Endothelial cell of umbilical vein (primary cell): ENCODE measurements at regions of chr20 and their contacts with region 1.

Region 1: GRCh38 chr20:45771182-45771759 is 20.4 kb downstream of the WFDC3 start:
- DNase-seq: peak; percentile 88
- H3K4me3 ChIP-seq: no peak overlapping the region
- H3K27ac ChIP-seq: no peak overlapping the region
- H3K4me1 ChIP-seq: no peaks in the 10 kb centered on the region
- H3K27me3 ChIP-seq: peaks cover 0 to 4% of the 10 kb centered on the region in 2 experiments
- CTCF ChIP-seq: peak; percentile 85 to 93
- POLR2A ChIP-seq: no peak

Region 2: GRCh38 chr20:44785769-44786168 is 985.5 kb before region 1 on chr20:
- CTCF ChIA-PET with region 1: no interaction called
- POLR2A ChIA-PET with region 1: no interaction called
- dilution Hi-C with region 1: no loop called
- intact Hi-C with region 1: no loop called
- DNase-seq: no peak
- H3K4me3 ChIP-seq: no peak overlapping the region
- H3K27ac ChIP-seq: no peak overlapping the region
- H3K4me1 ChIP-seq: no peaks in the 10 kb centered on the region
- H3K27me3 ChIP-seq: peaks cover 0 to 2% of the 10 kb centered on the region in 2 experiments
- CTCF ChIP-seq: no peak
- POLR2A ChIP-seq: no peak

Region 3: DNA sequence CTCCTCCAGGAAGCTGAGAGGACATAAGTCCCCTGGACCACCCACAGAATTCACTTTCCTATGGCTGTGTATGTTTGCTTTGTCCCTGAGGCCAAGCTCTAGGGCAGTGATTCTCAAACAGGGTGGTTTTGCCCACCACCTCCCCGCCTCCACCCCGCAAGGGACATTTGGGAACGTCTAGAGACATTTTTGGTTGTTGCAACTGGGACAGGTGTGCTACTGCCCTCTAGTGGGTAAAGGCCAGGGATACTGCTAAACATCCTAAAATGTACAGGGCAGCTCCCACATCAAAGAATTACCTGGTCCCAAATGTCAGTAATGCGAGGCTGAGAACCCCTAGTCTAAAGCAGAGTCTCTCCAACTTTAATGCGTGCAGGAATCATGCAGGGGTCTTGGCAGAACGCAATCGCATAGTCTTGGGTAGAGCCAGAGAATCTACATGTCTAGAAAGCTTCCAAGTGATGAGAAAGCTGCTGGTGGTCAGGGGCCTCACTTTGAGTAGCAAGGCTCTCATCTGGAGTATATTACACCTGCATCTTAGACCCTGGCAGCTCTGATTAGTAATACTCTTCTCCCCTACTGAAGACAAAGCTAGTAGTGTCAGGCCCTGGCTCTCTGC is 675.4 kb before region 1 on chr20:
- CTCF ChIA-PET with region 1: interaction called, 13 read pairs
- POLR2A ChIA-PET with region 1: no interaction called
- dilution Hi-C with region 1: no loop called
- intact Hi-C with region 1: loop called (anchors 5 kb)
- DNase-seq: peak; percentile 52
- H3K4me3 ChIP-seq: no peak overlapping the region
- H3K27ac ChIP-seq: no peak overlapping the region
- H3K4me1 ChIP-seq: peaks cover under 1% of the 10 kb centered on the region
- H3K27me3 ChIP-seq: peaks cover 23 to 30% of the 10 kb centered on the region in 2 experiments
- CTCF ChIP-seq: peak; percentile 53 to 79
- POLR2A ChIP-seq: no peak

Region 4: GRCh38 chr20:45322952-45323383 is 448.3 kb before region 1 on chr20:
- CTCF ChIA-PET with region 1: interaction called, 78 read pairs
- POLR2A ChIA-PET with region 1: no interaction called
- dilution Hi-C with region 1: no loop called
- intact Hi-C with region 1: loop called (anchors 1 kb)
- DNase-seq: peak; percentile 41
- H3K4me3 ChIP-seq: no peak overlapping the region
- H3K27ac ChIP-seq: no peak overlapping the region
- H3K4me1 ChIP-seq: no peaks in the 10 kb centered on the region
- H3K27me3 ChIP-seq: peaks cover 2% of the 10 kb centered on the region in 2 experiments
- CTCF ChIP-seq: peak in 1 of 2 donors; percentile 15
- POLR2A ChIP-seq: no peak

Region 5: DNA sequence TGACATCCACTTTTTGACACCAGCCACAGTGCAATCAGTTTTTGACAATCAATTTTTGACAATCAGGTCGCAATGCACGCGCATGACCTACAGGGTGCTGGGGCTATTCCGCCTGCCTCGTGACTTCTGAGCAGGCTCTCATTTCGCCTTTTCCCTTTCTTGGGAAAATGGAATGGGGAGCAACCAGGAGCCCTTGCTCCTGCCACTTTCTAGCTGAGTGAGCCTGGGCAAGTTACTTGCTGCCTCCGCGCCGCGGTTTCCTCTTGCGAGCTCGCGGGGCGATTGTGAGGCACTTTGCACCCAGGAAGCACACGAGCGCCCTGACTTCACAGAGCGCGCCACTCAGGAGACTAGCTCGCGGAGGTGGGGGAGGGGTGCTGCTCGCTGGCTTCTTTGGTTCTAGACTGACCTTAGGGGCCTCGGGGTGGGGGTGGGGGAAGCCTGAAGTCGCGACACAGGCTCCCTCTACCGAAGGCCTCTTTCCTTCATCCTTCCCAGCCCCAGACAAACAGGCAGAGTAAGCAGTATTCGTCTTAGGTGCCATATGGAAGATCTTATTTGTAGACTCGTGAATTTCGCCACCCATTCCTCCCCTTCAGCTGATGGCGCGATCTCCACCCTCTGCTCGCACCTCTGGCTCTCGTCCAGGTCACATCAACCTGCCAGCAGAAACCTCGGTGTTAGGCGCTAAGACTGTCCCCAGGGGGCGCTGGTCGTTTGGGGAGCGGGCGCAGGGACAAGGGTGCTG is 397.7 kb before region 1 on chr20:
- CTCF ChIA-PET with region 1: interaction called, 67 read pairs
- POLR2A ChIA-PET with region 1: no interaction called
- dilution Hi-C with region 1: no loop called
- intact Hi-C with region 1: loop called (anchors 1 kb)
- DNase-seq: peak; percentile 84
- H3K4me3 ChIP-seq: peak overlapping the region; percentile 17 to 48 (median 30)
- H3K27ac ChIP-seq: no peak overlapping the region
- H3K4me1 ChIP-seq: peaks cover 7% of the 10 kb centered on the region
- H3K27me3 ChIP-seq: no peaks in the 10 kb centered on the region
- CTCF ChIP-seq: peak; percentile 85 to 96
- POLR2A ChIP-seq: no peak

Region 6: GRCh38 chr20:45545754-45546453 is 225.4 kb before region 1 on chr20:
- CTCF ChIA-PET with region 1: interaction called, 16 read pairs
- POLR2A ChIA-PET with region 1: no interaction called
- dilution Hi-C with region 1: no loop called
- intact Hi-C with region 1: loop called (anchors 1 kb)
- DNase-seq: no peak
- H3K4me3 ChIP-seq: no peak overlapping the region
- H3K27ac ChIP-seq: no peak overlapping the region
- H3K4me1 ChIP-seq: no peaks in the 10 kb centered on the region
- H3K27me3 ChIP-seq: no peaks in the 10 kb centered on the region
- CTCF ChIP-seq: no peak
- POLR2A ChIP-seq: no peak

Region 7: DNA sequence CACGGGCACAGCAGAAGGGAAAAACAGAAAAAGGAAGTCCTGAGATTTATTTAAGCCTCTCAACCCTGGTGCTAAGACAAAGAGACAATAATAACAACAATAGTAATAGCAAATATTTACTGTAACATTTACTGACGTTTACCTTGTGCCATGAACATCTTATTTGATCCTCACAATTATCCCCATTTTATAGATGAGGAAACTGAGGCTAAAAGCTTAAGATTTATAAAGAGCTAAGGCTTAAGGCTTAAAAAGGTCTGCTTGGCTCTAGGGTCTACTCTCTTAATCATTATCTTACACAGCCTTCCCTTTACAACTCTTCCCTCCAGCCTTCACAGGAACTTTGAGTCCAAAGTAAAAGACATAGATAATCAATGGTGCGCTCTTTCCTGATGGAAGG is 17.1 kb after region 1 on chr20:
- CTCF ChIA-PET with region 1: interaction called, 14 read pairs
- POLR2A ChIA-PET with region 1: no interaction called
- dilution Hi-C with region 1: no loop called
- intact Hi-C with region 1: no loop called
- DNase-seq: no peak
- H3K4me3 ChIP-seq: no peak overlapping the region
- H3K27ac ChIP-seq: no peak overlapping the region
- H3K4me1 ChIP-seq: peaks cover 7% of the 10 kb centered on the region
- H3K27me3 ChIP-seq: peaks cover 1 to 2% of the 10 kb centered on the region in 2 experiments
- CTCF ChIP-seq: no peak
- POLR2A ChIP-seq: no peak